ENCODE measurements at regions of chrX and their contacts with region 1.

Region 1: DNA sequence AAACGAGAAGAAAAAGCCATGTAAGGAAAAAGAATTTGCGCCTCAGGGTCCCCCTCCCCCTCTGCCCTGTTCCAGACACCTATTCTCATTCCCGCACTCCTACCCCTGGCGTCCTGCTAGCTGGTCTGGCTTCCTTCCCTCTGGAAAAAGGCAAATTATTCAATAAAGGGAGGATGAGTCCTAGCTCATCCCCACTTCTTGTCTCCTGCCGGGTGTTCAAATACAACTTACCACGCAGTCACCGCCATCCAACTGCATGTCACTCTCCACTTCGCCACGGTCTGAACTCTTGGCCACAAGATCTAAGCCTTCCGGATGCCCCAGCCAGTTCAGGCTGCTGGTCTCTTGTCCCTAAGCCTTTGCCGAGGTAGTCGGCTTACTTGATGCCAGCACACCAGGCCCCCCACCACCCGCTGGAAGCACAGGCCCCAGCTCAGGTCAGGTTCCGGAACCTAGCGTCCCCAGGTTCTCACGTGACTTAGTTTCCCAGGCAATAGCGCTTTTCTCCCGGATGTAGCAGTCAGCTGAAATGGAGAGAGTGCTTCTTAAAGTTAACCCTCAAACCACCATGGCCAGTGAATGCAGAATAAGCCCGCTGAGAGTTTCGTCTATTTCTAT is 209.6 kb upstream of the SPIN4 start:
- DNase-seq: peak; percentile 7 to 76 (median 31)
- ATAC-seq: peak; percentile 90
- H3K4me3 ChIP-seq: peak overlapping the region; percentile 84
- H3K4me3 Mint-ChIP-seq: peak overlapping the region; percentile 96
- H3K27ac ChIP-seq: peak overlapping the region; percentile 13 to 62
- H3K27ac Mint-ChIP-seq: peak overlapping the region; percentile 93
- H3K4me1 ChIP-seq: no peaks in the 10 kb centered on the region
- H3K4me1 Mint-ChIP-seq: peaks cover 25% of the 10 kb centered on the region
- H3K27me3 ChIP-seq: no peaks in the 10 kb centered on the region
- H3K27me3 Mint-ChIP-seq: no peaks in the 10 kb centered on the region
- CTCF ChIP-seq: no peak

Region 2: GRCh38 chrX:63282077-63282476 is 278.6 kb before region 1 on chrX:
- CTCF ChIA-PET with region 1: no interaction called
- POLR2A ChIA-PET with region 1: no interaction called
- intact Hi-C with region 1: no loop called
- DNase-seq: no peak
- ATAC-seq: no peak
- H3K4me3 ChIP-seq: no peak overlapping the region
- H3K4me3 Mint-ChIP-seq: no peak overlapping the region
- H3K27ac ChIP-seq: no peak overlapping the region
- H3K27ac Mint-ChIP-seq: no peak overlapping the region
- H3K4me1 ChIP-seq: no peaks in the 10 kb centered on the region
- H3K4me1 Mint-ChIP-seq: no peaks in the 10 kb centered on the region
- H3K27me3 ChIP-seq: no peaks in the 10 kb centered on the region
- H3K27me3 Mint-ChIP-seq: no peaks in the 10 kb centered on the region
- CTCF ChIP-seq: no peak

Region 3: DNA sequence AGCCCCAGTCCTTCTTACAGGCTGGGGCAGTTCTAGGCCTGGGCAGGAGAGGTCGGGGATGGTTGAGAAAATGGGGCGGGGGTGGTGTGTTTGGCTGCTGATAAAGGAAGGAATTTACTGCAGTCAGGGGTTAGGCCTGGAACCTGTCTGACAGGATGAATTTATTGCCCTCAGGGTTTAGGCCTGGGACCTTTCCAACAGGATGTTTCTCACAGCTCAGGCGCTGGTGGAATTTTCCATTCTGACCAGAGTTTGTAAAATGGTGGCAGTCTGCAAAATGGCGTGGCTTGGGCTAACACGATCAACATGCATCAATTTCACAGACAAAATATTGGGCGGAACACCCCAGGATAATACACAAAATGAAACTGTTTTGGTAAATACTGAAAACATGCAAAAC is 126.0 kb before region 1 on chrX:
- CTCF ChIA-PET with region 1: no interaction called
- POLR2A ChIA-PET with region 1: no interaction called
- intact Hi-C with region 1: no loop called
- DNase-seq: no peak
- ATAC-seq: no peak
- H3K4me3 ChIP-seq: no peak overlapping the region
- H3K4me3 Mint-ChIP-seq: no peak overlapping the region
- H3K27ac ChIP-seq: no peak overlapping the region
- H3K27ac Mint-ChIP-seq: no peak overlapping the region
- H3K4me1 ChIP-seq: no peaks in the 10 kb centered on the region
- H3K4me1 Mint-ChIP-seq: no peaks in the 10 kb centered on the region
- H3K27me3 ChIP-seq: no peaks in the 10 kb centered on the region
- H3K27me3 Mint-ChIP-seq: no peaks in the 10 kb centered on the region
- CTCF ChIP-seq: no peak

Region 4: GRCh38 chrX:63754860-63755582 is 194.3 kb after region 1 on chrX:
- CTCF ChIA-PET with region 1: no interaction called
- POLR2A ChIA-PET with region 1: interaction called, 5 read pairs
- intact Hi-C with region 1: loop called (anchors 5 kb)
- DNase-seq: peak; percentile 70 to 94 (median 83)
- ATAC-seq: peak; percentile 92
- H3K4me3 ChIP-seq: peak overlapping the region; percentile 93
- H3K4me3 Mint-ChIP-seq: peak overlapping the region; percentile 99
- H3K27ac ChIP-seq: peak overlapping the region; percentile 70 to 80
- H3K27ac Mint-ChIP-seq: peak overlapping the region; percentile 97
- H3K4me1 ChIP-seq: peaks cover 11% of the 10 kb centered on the region
- H3K4me1 Mint-ChIP-seq: peaks cover 28% of the 10 kb centered on the region
- H3K27me3 ChIP-seq: no peaks in the 10 kb centered on the region
- H3K27me3 Mint-ChIP-seq: no peaks in the 10 kb centered on the region
- CTCF ChIP-seq: no peak